HCT116 (cell line): ENCODE measurements at regions of chr9 and their contacts with region 1.

Region 1: DNA sequence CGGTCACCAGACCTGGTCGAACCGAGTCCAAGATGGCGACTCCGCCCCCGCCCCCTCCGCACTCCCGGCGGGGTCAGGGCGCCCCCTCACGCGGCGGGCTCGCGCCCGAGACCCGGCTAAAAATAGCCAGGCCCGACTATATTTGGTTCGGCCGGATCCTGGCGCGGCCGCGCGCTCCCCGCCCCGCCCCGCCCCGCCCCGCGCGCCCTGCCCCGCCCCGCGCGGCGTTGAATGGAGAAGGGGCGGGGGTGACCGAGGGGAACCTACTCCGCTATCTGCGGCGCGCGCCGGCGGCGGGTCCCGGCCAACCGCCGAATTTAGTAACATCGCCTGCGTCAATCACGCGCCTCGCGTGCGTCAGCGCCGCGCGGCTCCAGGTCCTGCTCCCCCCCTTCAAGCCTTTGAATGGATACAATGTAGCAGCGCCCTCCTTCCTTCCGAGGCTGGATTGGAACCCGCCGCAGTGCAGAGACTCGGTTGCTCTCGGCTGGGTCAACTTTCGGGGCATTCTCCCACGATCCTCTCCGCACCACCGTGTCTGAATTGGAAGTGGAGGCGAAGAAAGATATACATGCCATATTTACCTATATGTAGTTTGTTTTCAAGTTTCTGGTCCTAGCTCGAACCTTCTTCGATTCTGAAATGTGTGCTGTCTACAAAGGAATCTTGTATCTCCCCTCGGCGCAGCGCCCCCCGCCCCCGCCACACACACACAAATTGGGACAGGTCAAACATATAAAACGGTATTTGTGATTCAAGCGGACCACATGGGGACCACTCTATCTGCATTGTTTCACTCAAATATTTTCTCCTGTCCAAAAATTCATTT is 1.6 kb upstream of the NR4A3 start:
- DNase-seq: peak; percentile 93
- ATAC-seq: peak; percentile 72
- H3K4me3 ChIP-seq: peak overlapping the region; percentile 86 to 90
- H3K27ac ChIP-seq: peak overlapping the region; percentile 88
- H3K4me1 ChIP-seq: peaks cover 6 to 37% of the 10 kb centered on the region in 2 experiments
- H3K27me3 ChIP-seq: no peaks in the 10 kb centered on the region
- CTCF ChIP-seq: 0 out of 6 replicates have a peak, but pooled peaks of 1 of the 3 experiments have one; percentile 8
- POLR2A ChIP-seq: no peak
- RAD21 ChIP-seq: no peak

Region 2: DNA sequence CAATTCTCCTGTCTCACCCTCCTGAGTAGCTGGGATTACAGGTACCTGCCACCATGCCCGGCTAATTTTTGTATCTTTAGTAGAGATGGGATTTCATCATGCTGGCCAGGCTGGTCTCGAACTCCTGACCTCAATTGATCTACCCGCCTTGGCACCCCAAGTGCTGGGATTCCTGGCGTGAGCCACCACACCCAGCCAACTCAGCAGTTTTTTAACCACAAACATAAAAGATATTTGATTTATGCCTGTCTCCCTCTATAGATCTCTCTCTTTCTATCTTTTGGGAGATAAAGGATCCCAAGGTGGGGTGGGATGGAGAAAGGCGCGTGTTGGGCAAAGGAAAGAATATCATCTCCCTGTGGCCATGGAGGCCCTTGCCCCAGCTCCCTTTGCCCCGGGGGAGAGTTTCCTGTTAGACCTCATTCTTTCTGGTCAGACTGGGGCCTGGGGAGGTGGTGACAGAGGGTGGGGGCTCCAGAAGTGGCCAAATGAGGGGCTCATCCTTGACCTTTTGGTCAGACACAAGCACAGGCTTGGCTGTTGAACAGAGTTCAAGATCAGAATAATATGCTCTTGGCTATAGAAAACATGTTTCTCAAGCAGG is 28.5 kb after region 1 on chr9:
- CTCF ChIA-PET with region 1: no interaction called
- POLR2A ChIA-PET with region 1: no interaction called
- RAD21 ChIA-PET with region 1: no interaction called
- intact Hi-C with region 1: no loop called
- DNase-seq: no peak
- ATAC-seq: no peak
- H3K4me3 ChIP-seq: no peak overlapping the region
- H3K27ac ChIP-seq: no peak overlapping the region
- H3K4me1 ChIP-seq: no peaks in the 10 kb centered on the region
- H3K27me3 ChIP-seq: no peaks in the 10 kb centered on the region
- CTCF ChIP-seq: no peak
- POLR2A ChIP-seq: no peak
- RAD21 ChIP-seq: no peak

Region 3: GRCh38 chr9:99859243-99859980 is 39.3 kb after region 1 on chr9:
- CTCF ChIA-PET with region 1: no interaction called
- POLR2A ChIA-PET with region 1: no interaction called
- RAD21 ChIA-PET with region 1: no interaction called
- intact Hi-C with region 1: no loop called
- DNase-seq: no peak
- ATAC-seq: no peak
- H3K4me3 ChIP-seq: no peak overlapping the region
- H3K27ac ChIP-seq: no peak overlapping the region
- H3K4me1 ChIP-seq: no peaks in the 10 kb centered on the region
- H3K27me3 ChIP-seq: no peaks in the 10 kb centered on the region
- CTCF ChIP-seq: no peak
- POLR2A ChIP-seq: no peak
- RAD21 ChIP-seq: no peak

Region 4: GRCh38 chr9:99906403-99907207 is 86.5 kb after region 1 on chr9 and contains the start of gene STX17:
- CTCF ChIA-PET with region 1: no interaction called
- POLR2A ChIA-PET with region 1: interaction called, 3 read pairs
- RAD21 ChIA-PET with region 1: no interaction called
- intact Hi-C with region 1: loop called (anchors 2 kb)
- DNase-seq: peak; percentile 54
- ATAC-seq: peak; percentile 85
- H3K4me3 ChIP-seq: peak within 1 kb of the TSS; percentile 68 to 82
- H3K27ac ChIP-seq: peak within 1 kb of the TSS; percentile 79
- H3K4me1 ChIP-seq: peaks cover 3 to 16% of the 10 kb centered on the region in 2 experiments; a peak in 3 of 4 replicates
- H3K27me3 ChIP-seq: no peaks in the 10 kb centered on the region
- CTCF ChIP-seq: no peak
- POLR2A ChIP-seq: peak; percentile 70
- RAD21 ChIP-seq: no peak
- total RNA-seq, gene STX17: 24.6 TPM

Region 5: DNA sequence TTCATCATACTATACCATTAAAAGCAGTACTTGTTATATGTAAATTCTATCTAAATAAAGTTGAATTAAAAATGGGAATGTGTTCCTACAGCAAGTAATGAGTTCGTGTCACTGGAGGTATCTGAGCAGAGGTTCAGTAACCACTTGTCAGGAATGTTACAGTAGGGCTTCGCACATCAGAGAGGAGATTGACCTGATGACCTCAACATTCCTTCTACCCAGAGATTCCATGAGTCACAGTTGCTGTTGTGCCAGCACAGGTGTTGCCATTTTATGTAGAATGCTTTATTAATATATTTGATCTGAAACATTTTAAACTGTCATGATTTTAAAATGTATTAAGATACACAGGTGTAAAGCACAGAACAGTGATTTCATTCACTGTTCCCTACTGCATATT is 146.7 kb after region 1 on chr9:
- CTCF ChIA-PET with region 1: no interaction called
- POLR2A ChIA-PET with region 1: no interaction called
- RAD21 ChIA-PET with region 1: no interaction called
- intact Hi-C with region 1: loop called (anchors 10 kb)
- DNase-seq: peak; percentile 76
- ATAC-seq: peak; percentile 99
- H3K4me3 ChIP-seq: no peak overlapping the region
- H3K27ac ChIP-seq: no peak overlapping the region; the same call in 1 of the 2 replicates
- H3K4me1 ChIP-seq: peaks cover 15 to 18% of the 10 kb centered on the region in 2 experiments
- H3K27me3 ChIP-seq: no peaks in the 10 kb centered on the region
- CTCF ChIP-seq: no peak
- POLR2A ChIP-seq: no peak
- RAD21 ChIP-seq: 0 out of 2 replicates have a peak, but pooled peaks have one; percentile 12

Region 6: GRCh38 chr9:100098887-100099721 is 279.0 kb after region 1 on chr9 and contains the starts of genes ERP44 and INVS:
- CTCF ChIA-PET with region 1: no interaction called
- POLR2A ChIA-PET with region 1: no interaction called
- RAD21 ChIA-PET with region 1: no interaction called
- intact Hi-C with region 1: loop called (anchors 5 kb)
- DNase-seq: peak; percentile 97
- ATAC-seq: peak; percentile 96
- H3K4me3 ChIP-seq: peak within 1 kb of the TSS; percentile 90 to 97
- H3K27ac ChIP-seq: peak within 1 kb of the TSS; percentile 73
- H3K4me1 ChIP-seq: peaks cover 0 to 12% of the 10 kb centered on the region in 2 experiments; a peak in 3 of 4 replicates
- H3K27me3 ChIP-seq: no peaks in the 10 kb centered on the region
- CTCF ChIP-seq: no peak
- POLR2A ChIP-seq: peak; percentile 31
- RAD21 ChIP-seq: no peak
- total RNA-seq, gene ERP44: 9.4 TPM
- total RNA-seq, gene INVS: 21.1 TPM